Spleen (tissue), 13 donors: ENCODE measurements at regions of chrX and their contacts with region 1.

Region 1: DNA sequence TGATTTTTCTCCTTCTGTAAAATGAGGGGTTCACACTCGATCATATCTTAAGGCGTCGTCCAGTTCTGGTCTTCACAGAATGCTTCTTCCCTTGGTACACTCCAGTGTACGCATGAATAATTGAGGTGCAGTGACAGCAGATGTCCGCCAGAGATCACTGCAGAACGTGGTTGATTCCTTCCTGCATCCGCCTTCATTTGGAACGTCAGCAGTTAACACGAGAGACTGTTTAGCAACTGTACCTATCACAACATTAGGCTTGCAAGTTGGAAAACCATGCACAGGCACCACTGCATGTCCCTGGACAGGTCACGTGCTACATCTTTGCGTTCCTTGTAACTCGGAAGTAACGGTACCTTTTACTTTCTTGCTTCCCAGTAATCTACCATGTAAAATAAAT is 66.0 kb upstream of the GEMIN8 start:
- DNase-seq: no peak
- H3K4me3 ChIP-seq: peak overlapping the region in 1 of 8 donors; percentile 26
- H3K27ac ChIP-seq: no peak overlapping the region
- H3K4me1 ChIP-seq: peaks cover 0 to 3% (median 0%) of the 10 kb centered on the region in 6 donors
- H3K27me3 ChIP-seq: peaks cover 0 to 12% (median 0%) of the 10 kb centered on the region in 7 donors
- CTCF ChIP-seq: peak in 10 of 11 experiments; percentile 37 to 70 (median 57)
- POLR2A ChIP-seq: no peak

Region 2: DNA sequence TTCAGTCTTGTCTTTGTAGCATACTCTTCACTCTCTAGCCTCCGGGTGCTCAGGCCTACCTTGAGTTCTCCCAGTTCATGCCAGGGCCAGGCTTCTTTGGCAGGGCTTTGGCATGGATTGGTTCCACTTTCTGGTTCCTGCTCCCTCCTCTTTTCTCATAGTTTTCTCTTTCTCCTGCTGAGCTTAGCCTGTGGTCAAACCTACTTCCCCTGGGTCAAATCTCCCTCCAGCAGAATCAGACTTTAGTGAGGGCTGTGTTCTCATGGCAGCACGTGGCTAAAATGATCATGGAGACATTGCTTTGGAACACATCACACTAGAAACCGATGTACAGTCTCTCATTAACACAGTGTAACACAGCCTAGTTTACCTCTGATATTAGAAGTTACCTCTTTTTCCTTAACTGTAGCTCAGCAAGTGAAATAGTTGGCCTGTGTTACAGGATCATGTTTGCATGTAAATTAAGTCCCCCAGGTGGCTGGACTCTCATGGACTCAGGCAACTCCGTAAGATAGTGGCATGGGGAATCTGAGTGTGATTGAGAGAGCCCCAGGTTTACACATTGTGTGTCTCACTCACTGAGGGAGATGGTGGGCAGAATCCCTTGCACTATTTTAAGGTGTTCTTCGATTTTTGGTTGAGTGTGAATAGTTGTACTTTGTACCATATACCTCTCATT is 393.5 kb before region 1 on chrX:
- intact Hi-C with region 1: no loop called
- DNase-seq: no peak
- H3K4me3 ChIP-seq: no peak overlapping the region
- H3K27ac ChIP-seq: peak overlapping the region in 1 of 8 donors; percentile 17
- H3K4me1 ChIP-seq: peaks cover 10 to 70% (median 36%) of the 10 kb centered on the region in 6 donors
- H3K27me3 ChIP-seq: peaks cover 0 to 4% (median 0%) of the 10 kb centered on the region in 7 donors
- CTCF ChIP-seq: no peak
- POLR2A ChIP-seq: no peak

Region 3: DNA sequence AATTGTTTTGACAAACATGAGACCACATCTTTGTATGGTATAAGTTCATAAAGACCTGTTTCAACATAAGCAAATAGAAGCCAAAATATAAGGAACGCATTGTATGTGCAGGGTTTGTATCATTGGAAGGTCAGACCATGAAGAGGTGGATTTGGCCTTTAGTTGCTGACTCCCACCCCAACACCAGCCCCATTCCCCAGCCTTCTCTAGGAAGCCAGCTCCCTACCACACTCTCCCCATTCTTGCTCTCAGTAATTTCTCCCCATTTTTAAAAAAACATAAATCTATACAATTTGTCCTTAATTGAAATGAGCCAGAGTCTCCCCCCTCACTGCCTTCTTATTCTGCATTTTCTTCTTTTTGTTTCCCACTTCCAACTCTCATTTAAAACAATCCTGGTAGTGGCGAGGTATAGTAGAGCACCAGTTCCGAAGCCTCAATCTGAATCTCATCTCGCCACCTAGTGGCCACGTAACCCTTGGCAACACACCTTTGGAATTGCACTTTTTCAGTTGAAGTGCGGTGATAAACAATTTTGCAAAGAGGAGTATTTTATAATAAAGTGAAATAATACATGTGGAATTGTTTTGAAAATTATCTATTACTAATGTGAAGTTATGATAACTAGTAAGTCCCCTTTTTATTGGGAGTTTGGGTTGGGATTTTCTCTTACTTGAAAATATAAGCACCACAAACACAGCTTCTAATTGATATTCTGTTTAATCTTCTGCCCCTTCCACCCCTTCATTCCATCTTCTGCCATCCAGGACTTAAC is 1047.5 kb after region 1 on chrX:
- intact Hi-C with region 1: loop called (anchors 10 kb)
- DNase-seq: peak; percentile 70
- H3K4me3 ChIP-seq: no peak overlapping the region
- H3K27ac ChIP-seq: no peak overlapping the region
- H3K4me1 ChIP-seq: no peaks in the 10 kb centered on the region
- H3K27me3 ChIP-seq: peaks cover 0 to 13% (median 0%) of the 10 kb centered on the region in 7 donors
- CTCF ChIP-seq: peak in 10 of 11 experiments; percentile 35 to 71 (median 66)
- POLR2A ChIP-seq: no peak